ENCODE measurements at regions of chr1 and their contacts with region 1.

Region 1: GRCh38 chr1:95043141-95043980 is 29.4 kb downstream of the ALG14 start:
- DNase-seq: peak; percentile 70
- H3K4me3 ChIP-seq: peak overlapping the region in 1 of 2 experiments; percentile 20; a peak in 1 of 4 replicates
- H3K27ac ChIP-seq: no peak overlapping the region; a peak in 1 of 4 replicates
- H3K4me1 ChIP-seq: peaks cover 8 to 9% of the 10 kb centered on the region in 2 experiments; a peak in 3 of 4 replicates
- H3K27me3 ChIP-seq: no peaks in the 10 kb centered on the region
- CTCF ChIP-seq: peak; percentile 99
- EP300 ChIP-seq: no peak
- RAD21 ChIP-seq: peak; percentile 98

Region 2: GRCh38 chr1:94805912-94806311 is 237.4 kb before region 1 on chr1:
- CTCF ChIA-PET with region 1: interaction called, 40 read pairs
- POLR2A ChIA-PET with region 1: no interaction called
- DNase-seq: peak; percentile 63
- H3K4me3 ChIP-seq: no peak overlapping the region
- H3K27ac ChIP-seq: no peak overlapping the region
- H3K4me1 ChIP-seq: peaks cover 6 to 29% of the 10 kb centered on the region in 2 experiments; a peak in 3 of 4 replicates
- H3K27me3 ChIP-seq: no peaks in the 10 kb centered on the region
- CTCF ChIP-seq: peak; percentile 97
- EP300 ChIP-seq: no peak
- RAD21 ChIP-seq: peak; percentile 97

Region 3: GRCh38 chr1:94832446-94832845 is 210.9 kb before region 1 on chr1:
- CTCF ChIA-PET with region 1: interaction called, 12 read pairs
- POLR2A ChIA-PET with region 1: no interaction called
- DNase-seq: no peak
- H3K4me3 ChIP-seq: no peak overlapping the region
- H3K27ac ChIP-seq: no peak overlapping the region
- H3K4me1 ChIP-seq: peaks cover 0 to 3% of the 10 kb centered on the region in 2 experiments; a peak in 1 of 4 replicates
- H3K27me3 ChIP-seq: no peaks in the 10 kb centered on the region
- CTCF ChIP-seq: no peak
- EP300 ChIP-seq: no peak
- RAD21 ChIP-seq: no peak

Region 4: DNA sequence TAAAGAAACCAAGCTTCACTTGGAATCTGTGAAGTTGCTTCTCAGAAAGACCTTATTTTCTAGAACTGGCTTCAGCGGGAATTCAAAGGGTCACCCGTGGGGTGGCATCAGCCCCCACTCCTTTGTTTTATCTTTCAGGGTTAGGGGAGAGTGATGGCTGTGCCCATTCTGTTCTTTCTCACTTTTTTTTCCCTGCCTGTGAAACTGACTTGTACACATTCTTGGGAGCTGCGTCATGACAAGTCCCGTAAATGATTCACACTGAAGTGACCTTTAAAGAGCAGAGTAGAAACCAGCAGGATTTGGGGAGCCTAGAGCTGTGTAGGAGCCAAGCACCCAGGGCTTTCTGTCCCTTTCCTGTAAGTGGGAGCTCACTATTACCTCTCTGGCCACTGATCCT is 179.4 kb before region 1 on chr1:
- CTCF ChIA-PET with region 1: interaction called, 39 read pairs
- POLR2A ChIA-PET with region 1: no interaction called
- DNase-seq: no peak
- H3K4me3 ChIP-seq: peak overlapping the region in 1 of 2 experiments; percentile 40; a peak in 3 of 4 replicates
- H3K27ac ChIP-seq: peak overlapping the region; percentile 90 to 98
- H3K4me1 ChIP-seq: peaks cover 29 to 46% of the 10 kb centered on the region in 2 experiments
- H3K27me3 ChIP-seq: no peaks in the 10 kb centered on the region
- CTCF ChIP-seq: no peak
- EP300 ChIP-seq: peak; percentile 48 to 97; a peak in 3 of 4 replicates
- RAD21 ChIP-seq: no peak

Region 5: GRCh38 chr1:94909486-94909885 is 133.9 kb before region 1 on chr1:
- CTCF ChIA-PET with region 1: interaction called, 18 read pairs
- POLR2A ChIA-PET with region 1: interaction called, 8 read pairs
- DNase-seq: no peak
- H3K4me3 ChIP-seq: no peak overlapping the region
- H3K27ac ChIP-seq: peak overlapping the region in 1 of 2 experiments; percentile 43; a peak in 1 of 4 replicates
- H3K4me1 ChIP-seq: peaks cover 24 to 36% of the 10 kb centered on the region in 2 experiments; a peak in 3 of 4 replicates
- H3K27me3 ChIP-seq: no peaks in the 10 kb centered on the region
- CTCF ChIP-seq: no peak
- EP300 ChIP-seq: no peak
- RAD21 ChIP-seq: no peak

Region 6: DNA sequence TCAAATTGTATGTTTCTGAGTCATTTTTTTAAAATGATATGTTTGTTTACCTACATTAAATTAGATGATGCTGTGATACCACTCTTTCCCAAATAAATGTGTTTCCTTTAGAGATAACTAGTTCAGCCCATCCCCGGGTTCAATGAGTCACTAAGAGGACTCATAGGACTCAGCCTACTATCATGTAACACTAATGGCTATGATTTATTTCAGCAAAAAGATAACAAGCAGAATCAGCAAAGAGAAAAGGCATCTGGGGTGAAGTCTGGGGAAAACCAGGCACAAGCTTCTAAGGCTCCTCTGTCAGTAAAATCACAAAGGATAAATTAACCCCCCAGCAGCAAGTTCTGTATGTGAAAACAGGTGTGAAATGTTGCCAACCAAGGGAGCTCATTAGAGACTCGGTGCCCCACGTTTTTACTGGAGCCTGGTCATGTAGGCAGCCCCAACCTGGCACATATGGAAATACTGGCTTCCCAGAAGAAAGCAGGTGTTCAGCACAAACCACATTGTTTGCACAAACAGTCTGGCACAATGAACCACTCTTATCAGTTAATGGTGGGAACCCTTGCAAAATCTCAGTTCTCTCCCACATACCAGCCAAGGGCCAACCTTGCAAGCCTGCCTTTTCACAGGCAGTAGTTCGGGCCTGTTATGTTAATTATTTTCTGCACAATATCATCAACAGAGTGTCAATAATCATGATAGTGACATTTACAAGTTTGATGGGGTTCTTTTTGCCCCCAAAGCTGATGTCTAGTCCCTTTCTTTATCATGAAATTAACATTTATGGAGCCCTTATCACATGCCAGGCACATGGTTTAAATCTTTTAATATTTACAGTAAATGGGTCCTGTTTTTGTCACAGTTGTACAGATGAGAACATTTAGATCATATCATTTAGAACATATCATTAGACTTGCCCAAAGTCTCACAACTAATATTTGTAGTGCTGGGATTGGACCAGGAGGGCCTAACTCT is 93.4 kb before region 1 on chr1:
- CTCF ChIA-PET with region 1: interaction called, 20 read pairs
- POLR2A ChIA-PET with region 1: no interaction called
- DNase-seq: peak; percentile 68
- H3K4me3 ChIP-seq: no peak overlapping the region
- H3K27ac ChIP-seq: peak overlapping the region; percentile 46 to 99; a peak in 3 of 4 replicates
- H3K4me1 ChIP-seq: peaks cover 0 to 38% of the 10 kb centered on the region in 2 experiments; a peak in 2 of 4 replicates
- H3K27me3 ChIP-seq: no peaks in the 10 kb centered on the region
- CTCF ChIP-seq: no peak
- EP300 ChIP-seq: peak; percentile 64 to 98; a peak in 2 of 4 replicates
- RAD21 ChIP-seq: peak; percentile 21; the same call in 1 of the 2 replicates

Region 7: GRCh38 chr1:95095833-95096217 is 52.5 kb after region 1 on chr1:
- CTCF ChIA-PET with region 1: no interaction called
- POLR2A ChIA-PET with region 1: no interaction called
- DNase-seq: no peak
- H3K4me3 ChIP-seq: no peak overlapping the region
- H3K27ac ChIP-seq: no peak overlapping the region
- H3K4me1 ChIP-seq: no peaks in the 10 kb centered on the region
- H3K27me3 ChIP-seq: no peaks in the 10 kb centered on the region
- CTCF ChIP-seq: no peak
- EP300 ChIP-seq: no peak
- RAD21 ChIP-seq: no peak

Region 8: DNA sequence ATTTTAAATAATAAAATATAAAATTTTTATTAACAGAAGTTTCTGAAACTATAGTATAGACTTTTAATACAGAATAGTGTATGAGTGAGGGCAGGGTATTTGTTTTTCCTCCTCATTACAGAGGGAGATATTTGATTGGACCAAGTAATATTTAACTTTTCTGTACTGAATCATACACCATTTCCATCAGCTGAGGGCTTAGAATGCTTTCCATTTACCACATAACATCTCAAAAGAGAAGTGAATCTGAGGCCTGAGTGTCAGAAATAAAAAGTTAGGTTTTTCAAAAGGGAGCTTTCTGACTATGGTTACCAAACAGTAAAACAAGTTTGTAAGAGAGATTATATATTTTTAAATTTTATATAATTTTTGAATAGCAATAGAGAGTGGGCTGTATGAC is 103.3 kb after region 1 on chr1:
- CTCF ChIA-PET with region 1: no interaction called
- POLR2A ChIA-PET with region 1: no interaction called
- DNase-seq: no peak
- H3K4me3 ChIP-seq: no peak overlapping the region
- H3K27ac ChIP-seq: no peak overlapping the region
- H3K4me1 ChIP-seq: no peaks in the 10 kb centered on the region
- H3K27me3 ChIP-seq: no peaks in the 10 kb centered on the region
- CTCF ChIP-seq: no peak
- EP300 ChIP-seq: no peak
- RAD21 ChIP-seq: no peak

Region 9: GRCh38 chr1:95233737-95234500 is 190.6 kb after region 1 on chr1 and contains the start of gene RWDD3:
- CTCF ChIA-PET with region 1: interaction called, 17 read pairs
- POLR2A ChIA-PET with region 1: interaction called, 3 read pairs
- DNase-seq: peak; percentile 97
- H3K4me3 ChIP-seq: peak within 1 kb of the TSS; percentile 86 to 92
- H3K27ac ChIP-seq: peak within 1 kb of the TSS; percentile 55 to 86; a peak in 3 of 4 replicates
- H3K4me1 ChIP-seq: peaks cover 13 to 17% of the 10 kb centered on the region in 2 experiments; a peak in 3 of 4 replicates
- H3K27me3 ChIP-seq: no peaks in the 10 kb centered on the region
- CTCF ChIP-seq: peak; percentile 77
- EP300 ChIP-seq: no peak
- RAD21 ChIP-seq: peak; percentile 77
- polyA plus RNA-seq, gene RWDD3: 11.9 and 19.5 TPM in 2 replicates

Measured in SK-N-SH (cell line).